Heart left ventricle (tissue), 16 donors: ENCODE measurements at regions of chrX and their contacts with region 1.

Region 1: DNA sequence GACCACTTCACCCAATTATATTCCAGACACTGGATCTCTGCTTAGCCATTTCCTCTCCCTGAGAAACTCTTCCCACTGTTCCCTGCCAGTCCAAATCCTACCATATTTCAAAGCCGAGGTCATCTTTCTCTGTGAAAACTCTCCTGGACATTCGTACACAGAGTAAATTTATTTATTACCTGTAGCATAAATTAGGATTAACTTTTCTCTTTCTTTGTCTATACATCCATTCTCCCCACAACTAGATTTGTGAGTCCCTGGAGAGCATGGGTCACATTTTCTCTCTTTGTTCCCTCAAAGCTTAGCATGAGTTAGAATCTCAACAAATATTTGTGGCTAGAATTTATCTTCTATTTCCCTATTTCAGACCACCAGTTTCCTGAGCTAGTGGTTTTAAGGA is 27.8 kb upstream of the SMIM10 start:
- DNase-seq: no peak
- ATAC-seq: no peak
- H3K4me3 ChIP-seq: no peak overlapping the region
- H3K27ac ChIP-seq: no peak overlapping the region
- H3K4me1 ChIP-seq: no peaks in the 10 kb centered on the region
- H3K27me3 ChIP-seq: peaks cover 0 to 12% (median 0%) of the 10 kb centered on the region in 9 donors
- CTCF ChIP-seq: no peak
- POLR2A ChIP-seq: no peak

Region 2: GRCh38 chrX:135003876-135004623 is 41.0 kb after region 1 on chrX:
- intact Hi-C with region 1: loop called in 7 of 10 experiments (anchors 2 to 5 kb)
- DNase-seq: peak; percentile 88 to 94 (median 91)
- ATAC-seq: peak; percentile 98 to 99 (median 99)
- H3K4me3 ChIP-seq: peak overlapping the region; percentile 9 to 68 (median 49)
- H3K27ac ChIP-seq: peak overlapping the region in 3 of 12 donors; percentile 10 to 52 (median 42)
- H3K4me1 ChIP-seq: peaks cover 0 to 9% (median 0%) of the 10 kb centered on the region in 12 donors
- H3K27me3 ChIP-seq: peaks cover 0 to 15% (median 0%) of the 10 kb centered on the region in 9 donors
- CTCF ChIP-seq: no peak
- POLR2A ChIP-seq: peak in 1 of 2 donors; percentile 36

Region 3: DNA sequence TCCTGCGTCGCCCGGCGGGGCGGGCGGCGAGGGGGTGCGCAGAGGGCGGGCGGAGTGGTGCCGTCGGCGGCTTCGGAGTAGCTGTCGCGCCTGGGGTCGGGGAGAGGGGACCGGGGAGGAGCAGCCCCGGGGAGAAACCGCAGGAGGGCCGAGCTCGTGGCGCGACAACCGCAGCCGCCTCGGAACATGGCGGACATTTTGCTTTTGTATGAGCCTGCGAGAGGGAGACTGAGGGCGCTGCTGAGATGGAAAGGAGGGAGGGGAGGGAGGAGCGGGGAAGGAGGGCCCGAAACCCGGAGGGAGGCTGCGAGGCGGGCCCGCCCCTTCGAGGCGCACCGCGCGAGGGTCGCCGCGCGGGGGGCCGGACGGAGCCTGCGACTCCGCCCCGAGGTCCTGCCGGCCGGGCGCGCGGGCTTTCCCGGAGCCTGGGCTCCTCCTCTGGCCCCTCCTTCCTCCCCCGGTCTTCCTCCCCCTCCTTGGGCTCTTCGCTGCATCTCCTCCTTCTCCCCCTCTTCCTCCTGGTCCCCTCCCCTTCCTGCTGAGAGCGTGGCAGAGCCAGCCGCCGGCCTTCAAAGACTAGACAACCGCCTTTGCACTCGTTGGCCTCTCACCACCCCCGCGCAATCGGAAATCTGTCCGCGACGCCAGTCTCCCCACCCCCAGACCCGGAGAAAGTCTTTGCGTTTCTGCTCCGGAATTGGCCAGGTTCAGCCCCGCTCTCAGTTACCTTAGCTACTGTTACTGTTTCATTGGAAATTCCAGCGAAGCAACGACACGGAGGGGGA is 558.6 kb after region 1 on chrX:
- intact Hi-C with region 1: no loop called
- DNase-seq: peak; percentile 87 to 91 (median 88)
- ATAC-seq: peak; percentile 74 to 95 (median 94)
- H3K4me3 ChIP-seq: peak overlapping the region; percentile 20 to 89 (median 70)
- H3K27ac ChIP-seq: peak overlapping the region; percentile 79 to 93 (median 86)
- H3K4me1 ChIP-seq: peaks cover 0 to 13% (median 0%) of the 10 kb centered on the region in 12 donors
- H3K27me3 ChIP-seq: no peaks in the 10 kb centered on the region
- CTCF ChIP-seq: peak in 2 of 12 donors; percentile 10 to 12
- POLR2A ChIP-seq: peak in 1 of 2 donors; percentile 31

Region 4: DNA sequence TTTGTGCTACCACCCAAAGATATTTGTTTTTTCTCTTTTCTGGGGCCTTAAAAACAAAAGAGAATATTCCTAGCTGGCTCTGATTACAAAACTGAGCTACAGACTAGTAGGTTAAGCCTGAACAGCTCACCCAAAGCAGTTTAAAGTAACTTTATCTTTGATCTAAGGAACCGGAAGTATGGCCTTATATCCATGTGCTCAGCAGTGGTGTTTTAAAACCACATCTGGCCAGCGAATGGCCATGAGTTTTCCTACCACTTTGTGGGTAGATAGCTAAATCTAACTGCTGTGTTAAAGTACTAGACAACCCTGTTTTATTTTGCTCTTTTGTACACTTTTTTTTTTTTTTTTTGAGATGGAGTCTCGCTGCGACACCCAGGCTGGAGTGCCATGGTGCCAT is 1362.3 kb after region 1 on chrX:
- intact Hi-C with region 1: no loop called
- DNase-seq: no peak
- ATAC-seq: no peak
- H3K4me3 ChIP-seq: no peak overlapping the region
- H3K27ac ChIP-seq: no peak overlapping the region
- H3K4me1 ChIP-seq: no peaks in the 10 kb centered on the region
- H3K27me3 ChIP-seq: no peaks in the 10 kb centered on the region
- CTCF ChIP-seq: no peak
- POLR2A ChIP-seq: no peak